Mammary epithelial cell (primary cell): ENCODE measurements at regions of chr19 and their contacts with region 1.

Region 1: DNA sequence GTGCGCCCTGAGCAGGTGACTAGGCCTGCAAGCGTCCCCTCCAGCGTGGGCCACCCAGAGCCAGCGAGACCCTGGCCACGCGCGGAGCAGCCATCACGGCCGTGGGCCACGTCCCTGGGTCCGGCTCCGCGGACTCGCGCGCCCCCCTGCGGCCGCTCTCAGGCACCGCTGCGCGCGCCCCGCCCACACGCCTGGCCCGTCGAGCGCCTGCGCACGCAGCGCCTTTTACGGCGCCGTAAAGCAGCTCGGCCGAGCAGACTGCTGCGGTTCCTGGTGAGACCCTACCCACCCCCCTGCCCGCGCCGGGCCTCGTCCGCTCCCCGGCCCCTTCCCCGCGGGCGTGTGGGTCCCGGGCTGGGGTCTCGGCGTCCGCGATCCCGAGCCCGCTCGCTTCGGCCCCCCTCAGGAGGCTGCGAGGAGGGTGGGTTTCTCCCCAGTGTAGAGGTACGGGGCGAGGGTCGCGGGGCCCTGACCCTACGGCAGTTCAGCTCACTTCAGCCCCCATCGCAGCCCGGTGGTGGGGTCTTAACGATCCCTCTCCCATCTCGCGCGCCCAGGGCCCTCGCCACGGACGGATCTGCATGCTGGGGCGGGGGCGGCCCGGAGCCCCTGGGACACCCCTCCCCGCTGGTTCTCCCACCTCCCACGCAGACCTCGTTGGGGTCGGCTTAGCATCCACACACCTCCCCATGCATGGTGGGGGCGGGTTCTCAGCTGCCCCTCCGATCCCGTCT is at the start of gene TRAPPC5:
- DNase-seq: peak; percentile 60
- H3K4me3 ChIP-seq: peak within 1 kb of the TSS; percentile 93 to 99 (median 99)
- H3K27ac ChIP-seq: peak within 1 kb of the TSS; percentile 45
- H3K4me1 ChIP-seq: peaks cover 11% of the 10 kb centered on the region
- H3K27me3 ChIP-seq: no peaks in the 10 kb centered on the region
- CTCF ChIP-seq: peak; percentile 71 to 79
- total RNA-seq, gene TRAPPC5: 41.8 to 129 TPM

Region 2: GRCh38 chr19:7145494-7146485 is 535.0 kb before region 1 on chr19:
- CTCF ChIA-PET with region 1: no interaction called
- dilution Hi-C with region 1: no loop called
- in situ Hi-C with region 1: no loop called
- intact Hi-C with region 1: loop called (anchors 2 kb)
- DNase-seq: no peak
- H3K4me3 ChIP-seq: no peak overlapping the region
- H3K27ac ChIP-seq: no peak overlapping the region
- H3K4me1 ChIP-seq: no peaks in the 10 kb centered on the region
- H3K27me3 ChIP-seq: no peaks in the 10 kb centered on the region
- CTCF ChIP-seq: no peak

Region 3: DNA sequence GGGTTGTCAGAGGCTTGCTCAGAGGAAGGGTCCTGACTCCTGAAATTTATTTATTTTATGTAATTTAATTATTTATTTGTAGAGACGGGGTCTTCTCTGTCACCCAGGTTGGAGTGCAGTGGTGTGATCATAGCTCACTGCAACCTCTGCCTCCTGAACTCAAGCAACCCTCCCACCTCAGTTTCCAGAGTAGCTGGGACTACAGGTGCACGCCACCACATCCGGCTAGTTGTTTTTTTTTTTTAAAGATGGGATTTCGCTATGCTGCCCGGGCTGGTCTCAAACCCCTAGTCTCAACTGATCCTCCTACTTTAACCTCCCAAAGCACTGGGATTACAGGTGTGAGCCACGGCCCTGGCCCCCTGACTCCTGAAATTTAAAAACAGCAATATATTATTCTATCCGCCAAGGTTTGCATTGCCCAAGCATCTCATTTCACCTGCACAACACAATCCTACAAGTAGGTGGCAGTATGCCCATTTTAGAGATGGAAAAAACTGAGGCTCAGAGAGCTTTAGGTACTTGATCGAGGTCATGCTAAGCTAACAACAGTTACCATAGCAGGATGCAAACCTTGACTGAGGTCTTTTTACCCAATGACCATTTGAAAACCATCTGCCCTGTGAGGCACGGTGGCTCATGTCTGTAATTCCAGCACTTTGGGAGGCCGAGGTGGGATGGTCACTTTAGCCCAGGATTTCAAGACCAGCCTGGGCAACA is 313.9 kb before region 1 on chr19:
- CTCF ChIA-PET with region 1: no interaction called
- dilution Hi-C with region 1: no loop called
- in situ Hi-C with region 1: loop called in 1 of 2 experiments (anchors 25 kb)
- intact Hi-C with region 1: no loop called
- DNase-seq: peak; percentile 49
- H3K4me3 ChIP-seq: no peak overlapping the region
- H3K27ac ChIP-seq: no peak overlapping the region
- H3K4me1 ChIP-seq: no peaks in the 10 kb centered on the region
- H3K27me3 ChIP-seq: no peaks in the 10 kb centered on the region
- CTCF ChIP-seq: peak; percentile 41 to 46

Region 4: GRCh38 chr19:7562646-7563393 is 118.0 kb before region 1 on chr19:
- CTCF ChIA-PET with region 1: interaction called, 14 read pairs
- dilution Hi-C with region 1: no loop called
- in situ Hi-C with region 1: loop called in 1 of 2 experiments (anchors 10 kb)
- intact Hi-C with region 1: loop called (anchors 1 kb)
- DNase-seq: no peak
- H3K4me3 ChIP-seq: no peak overlapping the region
- H3K27ac ChIP-seq: no peak overlapping the region
- H3K4me1 ChIP-seq: no peaks in the 10 kb centered on the region
- H3K27me3 ChIP-seq: no peaks in the 10 kb centered on the region
- CTCF ChIP-seq: no peak

Region 5: DNA sequence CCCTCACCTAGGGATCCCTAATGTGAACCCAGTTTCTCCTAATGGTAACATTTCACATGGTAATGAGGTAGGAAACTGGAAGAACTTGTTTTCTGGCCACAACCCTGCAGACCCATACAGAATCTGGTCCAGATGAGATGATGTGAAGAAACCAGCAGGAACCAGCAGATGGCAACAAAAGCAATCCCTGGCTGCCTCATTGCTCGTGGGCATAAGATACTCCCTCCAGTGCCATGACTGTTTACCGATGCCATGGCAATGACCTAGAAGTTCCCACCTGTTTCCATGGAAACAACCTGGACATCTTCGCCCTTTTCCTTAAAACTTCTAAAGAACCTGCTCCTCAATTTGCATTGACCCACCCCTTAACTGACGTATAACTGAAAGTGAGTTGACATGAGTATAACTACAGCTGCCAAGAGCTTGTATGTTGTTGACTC is 68.0 kb after region 1 on chr19:
- CTCF ChIA-PET with region 1: no interaction called
- dilution Hi-C with region 1: no loop called
- in situ Hi-C with region 1: no loop called
- intact Hi-C with region 1: no loop called
- DNase-seq: peak; percentile 48
- H3K4me3 ChIP-seq: no peak overlapping the region
- H3K27ac ChIP-seq: no peak overlapping the region
- H3K4me1 ChIP-seq: no peaks in the 10 kb centered on the region
- H3K27me3 ChIP-seq: no peaks in the 10 kb centered on the region
- CTCF ChIP-seq: peak; percentile 2 to 52

Region 6: GRCh38 chr19:7829561-7830271 is 148.9 kb after region 1 on chr19 and contains the start of gene EVI5L:
- CTCF ChIA-PET with region 1: no interaction called
- dilution Hi-C with region 1: no loop called
- in situ Hi-C with region 1: no loop called
- intact Hi-C with region 1: loop called (anchors 1 kb)
- DNase-seq: peak; percentile 100
- H3K4me3 ChIP-seq: peak within 1 kb of the TSS; percentile 57 to 75 (median 60)
- H3K27ac ChIP-seq: no peak within 1 kb of the TSS
- H3K4me1 ChIP-seq: peaks cover 27% of the 10 kb centered on the region
- H3K27me3 ChIP-seq: no peaks in the 10 kb centered on the region
- CTCF ChIP-seq: no peak
- total RNA-seq, gene EVI5L: 15.2 to 17.5 TPM

Region 7: DNA sequence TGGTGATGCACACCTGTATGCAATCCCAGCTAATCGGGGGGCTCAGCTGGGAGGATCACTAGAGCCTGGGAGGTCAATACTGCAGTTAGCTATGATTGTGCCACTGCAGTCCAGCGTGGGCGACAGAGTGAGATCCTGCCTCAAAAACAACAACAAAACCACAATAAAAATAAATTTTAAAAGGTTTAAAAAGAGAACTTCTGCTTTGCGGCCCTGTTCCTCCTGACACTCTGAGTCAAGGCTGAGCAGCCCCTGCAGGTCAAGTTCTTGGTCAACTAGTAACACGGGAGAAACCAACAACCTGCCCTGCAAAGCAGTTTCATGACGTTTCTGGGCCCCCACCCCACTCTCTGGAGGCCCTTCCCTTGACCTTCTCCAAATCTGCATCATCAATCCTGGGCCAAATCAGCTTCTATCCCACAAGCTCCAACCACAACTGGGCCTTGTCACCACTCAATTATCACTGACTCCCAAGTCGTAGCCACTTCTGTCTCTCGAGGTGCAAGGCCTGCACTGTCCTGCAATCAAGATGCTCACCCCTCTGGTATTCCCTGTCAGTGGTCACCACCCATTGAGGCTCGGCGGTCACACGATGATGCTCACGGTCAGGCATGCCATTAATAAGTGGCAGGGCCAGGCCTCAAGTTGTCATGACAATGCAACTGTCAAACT is 317.2 kb after region 1 on chr19:
- CTCF ChIA-PET with region 1: no interaction called
- dilution Hi-C with region 1: no loop called
- in situ Hi-C with region 1: no loop called
- intact Hi-C with region 1: no loop called
- DNase-seq: no peak
- H3K4me3 ChIP-seq: no peak overlapping the region
- H3K27ac ChIP-seq: no peak overlapping the region
- H3K4me1 ChIP-seq: peaks cover 29% of the 10 kb centered on the region
- H3K27me3 ChIP-seq: no peaks in the 10 kb centered on the region
- CTCF ChIP-seq: no peak

Region 8: GRCh38 chr19:8877854-8878705 is 1197.3 kb after region 1 on chr19:
- CTCF ChIA-PET with region 1: no interaction called
- dilution Hi-C with region 1: no loop called
- in situ Hi-C with region 1: no loop called
- intact Hi-C with region 1: no loop called
- DNase-seq: no peak
- H3K4me3 ChIP-seq: no peak overlapping the region
- H3K27ac ChIP-seq: no peak overlapping the region
- H3K4me1 ChIP-seq: no peaks in the 10 kb centered on the region
- H3K27me3 ChIP-seq: no peaks in the 10 kb centered on the region
- CTCF ChIP-seq: no peak